Heart right ventricle (tissue), 16 donors: ENCODE measurements at regions of chr1 and their contacts with region 1.

Region 1: DNA sequence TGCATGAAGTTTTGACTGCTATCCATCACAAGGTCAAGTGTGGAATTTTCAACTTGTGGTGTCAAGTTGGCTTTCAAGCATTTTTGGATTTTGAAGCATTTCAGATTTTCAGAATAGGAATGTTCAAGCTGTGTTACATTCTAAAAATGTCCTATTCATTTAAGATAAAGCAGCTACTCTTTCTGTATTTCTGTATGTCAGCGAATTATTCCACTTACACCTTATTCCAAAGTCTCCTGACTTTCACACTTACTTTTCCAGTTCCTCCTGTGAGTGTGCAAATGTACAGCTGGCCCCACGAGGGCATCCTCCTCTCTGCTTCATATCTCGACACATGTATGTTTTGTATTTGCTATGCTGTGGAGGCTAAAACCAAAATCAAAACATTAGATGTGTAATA is 51.9 kb downstream of the RC3H1 start:
- DNase-seq: no peak
- ATAC-seq: no peak
- H3K4me3 ChIP-seq: no peak overlapping the region
- H3K27ac ChIP-seq: no peak overlapping the region
- H3K4me1 ChIP-seq: no peaks in the 10 kb centered on the region
- H3K27me3 ChIP-seq: no peaks in the 10 kb centered on the region
- CTCF ChIP-seq: no peak

Region 2: GRCh38 chr1:173937062-173937461 is 33.2 kb before region 1 on chr1:
- intact Hi-C with region 1: loop called in 1 of 10 experiments (anchors 5 kb)
- DNase-seq: no peak
- ATAC-seq: no peak
- H3K4me3 ChIP-seq: no peak overlapping the region
- H3K27ac ChIP-seq: no peak overlapping the region
- H3K4me1 ChIP-seq: no peaks in the 10 kb centered on the region
- H3K27me3 ChIP-seq: no peaks in the 10 kb centered on the region
- CTCF ChIP-seq: no peak

Region 3: DNA sequence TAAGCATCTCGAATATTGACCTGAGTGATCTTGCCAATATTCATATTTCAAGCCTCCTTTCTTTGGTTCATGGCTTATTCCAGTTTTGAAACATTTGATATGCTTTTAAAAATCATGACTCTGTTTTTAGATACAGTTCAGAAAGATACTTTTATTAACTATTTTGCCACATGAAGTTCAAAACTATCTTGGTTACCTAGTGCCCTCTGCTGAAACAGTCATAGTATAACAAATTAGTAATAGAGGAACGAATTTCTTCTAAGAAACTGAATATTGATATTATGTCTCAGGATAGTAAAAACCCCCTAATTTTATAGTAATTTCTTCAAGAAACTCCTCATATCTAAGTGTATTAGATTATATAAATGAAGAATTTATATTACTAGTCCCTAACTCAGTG is 104.5 kb after region 1 on chr1:
- intact Hi-C with region 1: loop called in 1 of 10 experiments (anchors 10 kb)
- DNase-seq: no peak
- ATAC-seq: no peak
- H3K4me3 ChIP-seq: no peak overlapping the region
- H3K27ac ChIP-seq: no peak overlapping the region
- H3K4me1 ChIP-seq: peaks cover 0 to 5% (median 0%) of the 10 kb centered on the region in 9 donors
- H3K27me3 ChIP-seq: no peaks in the 10 kb centered on the region
- CTCF ChIP-seq: peak in 8 of 9 donors; percentile 19 to 65 (median 53)

Region 4: DNA sequence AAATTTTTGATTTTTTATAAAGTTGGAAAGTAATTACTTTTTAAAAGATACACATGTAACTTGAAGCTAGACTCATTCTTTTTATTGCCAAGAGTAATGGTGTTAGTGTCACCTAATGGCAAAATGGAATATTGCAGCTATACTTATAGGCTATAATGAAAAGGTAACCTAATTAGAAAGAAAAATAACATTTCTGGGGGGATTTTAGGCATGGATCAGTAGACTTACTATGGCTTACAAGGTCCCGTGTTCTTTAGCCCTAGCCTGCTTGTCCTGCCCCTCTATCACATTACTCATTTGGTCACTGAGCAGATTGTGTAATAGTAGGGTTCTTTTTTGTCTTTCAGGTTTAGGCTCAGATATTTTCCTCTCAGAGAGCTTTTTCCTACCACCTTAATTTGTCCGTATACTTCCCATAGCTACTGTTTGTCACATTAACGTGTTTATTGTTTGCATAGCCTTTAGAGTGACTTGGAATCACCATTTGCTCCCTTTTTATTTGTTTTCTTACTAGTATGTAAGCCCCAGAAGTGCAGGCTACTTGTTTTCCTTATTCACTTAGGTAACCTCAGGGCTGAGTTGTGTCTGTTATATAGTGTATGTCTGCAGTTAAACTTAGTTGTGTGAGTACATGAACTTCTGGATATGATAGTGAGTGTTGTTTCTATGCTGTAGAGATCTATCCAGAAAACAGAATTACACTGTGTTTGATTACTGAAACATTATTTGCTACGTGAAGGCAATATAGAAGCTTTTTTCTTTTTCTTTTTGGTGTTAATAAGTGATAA is 247.7 kb after region 1 on chr1:
- intact Hi-C with region 1: loop called in 1 of 10 experiments (anchors 10 kb)
- DNase-seq: no peak
- ATAC-seq: peak in 7 of 8 donors; percentile 16 to 74 (median 52)
- H3K4me3 ChIP-seq: no peak overlapping the region
- H3K27ac ChIP-seq: peak overlapping the region in 1 of 10 donors; percentile 35
- H3K4me1 ChIP-seq: peaks cover 0 to 21% (median 8%) of the 10 kb centered on the region in 9 donors
- H3K27me3 ChIP-seq: no peaks in the 10 kb centered on the region
- CTCF ChIP-seq: peak; percentile 51 to 84 (median 75)

Region 5: DNA sequence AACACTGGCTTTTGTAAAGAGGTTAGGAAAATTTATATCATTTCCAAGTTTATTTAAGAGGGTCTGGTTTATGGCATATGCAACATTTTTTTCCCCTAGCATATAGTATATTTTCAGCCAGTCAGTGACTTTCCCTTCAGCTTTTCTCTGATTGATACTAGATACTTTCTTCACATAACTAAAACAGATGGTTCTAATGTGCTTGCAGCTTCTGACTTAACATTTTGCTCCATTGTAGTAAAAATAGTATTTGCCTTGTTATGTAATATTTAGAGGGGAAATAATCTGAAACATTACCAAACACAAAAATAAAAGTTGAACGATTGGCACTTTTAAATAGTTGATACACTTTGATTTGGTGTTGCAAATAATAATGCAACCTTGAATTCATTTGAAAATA is 669.2 kb after region 1 on chr1:
- intact Hi-C with region 1: no loop called
- DNase-seq: no peak
- ATAC-seq: no peak
- H3K4me3 ChIP-seq: no peak overlapping the region
- H3K27ac ChIP-seq: no peak overlapping the region
- H3K4me1 ChIP-seq: no peaks in the 10 kb centered on the region
- H3K27me3 ChIP-seq: no peaks in the 10 kb centered on the region
- CTCF ChIP-seq: no peak